ENCODE measurements at regions of chr5 and their contacts with region 1.

Region 1: GRCh38 chr5:64690417-64691151 is at the start of gene SHISAL2B:
- DNase-seq: peak in 1 of 2 experiments; percentile 87
- H3K4me3 ChIP-seq: peak within 1 kb of the TSS; percentile 46 to 65 (median 54)
- H3K27ac ChIP-seq: peak within 1 kb of the TSS; percentile 20; the same call in 1 of the 2 replicates
- H3K4me1 ChIP-seq: peaks cover 1 to 10% (median 6%) of the 10 kb centered on the region in 4 experiments
- H3K27me3 ChIP-seq: peaks cover 0 to 11% (median 8%) of the 10 kb centered on the region in 4 experiments; a peak in 6 of 7 replicates
- CTCF ChIP-seq: no peak
- EP300 ChIP-seq: no peak
- POLR2A ChIP-seq: peak; percentile 75 to 85
- RAD21 ChIP-seq: no peak
- total RNA-seq, gene SHISAL2B: 8.6 and 10.6 TPM in 2 replicates

Region 2: DNA sequence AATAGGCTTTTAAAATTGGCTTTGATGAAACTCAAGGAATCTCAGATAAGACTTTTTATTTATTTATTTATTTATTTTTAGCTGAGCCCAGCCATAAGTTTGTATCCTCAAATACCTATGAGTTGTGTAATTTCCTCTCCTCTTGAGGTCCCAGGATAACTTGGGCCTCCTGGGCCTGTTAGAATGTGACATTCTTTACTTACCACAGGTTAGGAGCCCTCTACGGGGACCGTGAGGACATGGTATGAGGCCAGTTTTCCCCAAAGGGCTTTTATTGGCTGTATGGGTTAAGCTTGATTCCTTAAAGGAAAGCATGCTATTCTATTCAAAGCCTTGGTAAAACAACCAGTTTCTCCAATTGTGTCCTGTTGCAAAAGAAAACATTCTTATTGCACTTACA is 16.6 kb after region 1 on chr5:
- CTCF ChIA-PET with region 1: interaction called, 4 read pairs
- POLR2A ChIA-PET with region 1: interaction called, 35 read pairs
- DNase-seq: no peak
- H3K4me3 ChIP-seq: no peak overlapping the region
- H3K27ac ChIP-seq: no peak overlapping the region
- H3K4me1 ChIP-seq: peaks cover 0 to 5% (median under 1%) of the 10 kb centered on the region in 4 experiments; a peak in 4 of 7 replicates
- H3K27me3 ChIP-seq: no peaks in the 10 kb centered on the region
- CTCF ChIP-seq: no peak
- EP300 ChIP-seq: no peak
- POLR2A ChIP-seq: no peak
- RAD21 ChIP-seq: no peak

Region 3: DNA sequence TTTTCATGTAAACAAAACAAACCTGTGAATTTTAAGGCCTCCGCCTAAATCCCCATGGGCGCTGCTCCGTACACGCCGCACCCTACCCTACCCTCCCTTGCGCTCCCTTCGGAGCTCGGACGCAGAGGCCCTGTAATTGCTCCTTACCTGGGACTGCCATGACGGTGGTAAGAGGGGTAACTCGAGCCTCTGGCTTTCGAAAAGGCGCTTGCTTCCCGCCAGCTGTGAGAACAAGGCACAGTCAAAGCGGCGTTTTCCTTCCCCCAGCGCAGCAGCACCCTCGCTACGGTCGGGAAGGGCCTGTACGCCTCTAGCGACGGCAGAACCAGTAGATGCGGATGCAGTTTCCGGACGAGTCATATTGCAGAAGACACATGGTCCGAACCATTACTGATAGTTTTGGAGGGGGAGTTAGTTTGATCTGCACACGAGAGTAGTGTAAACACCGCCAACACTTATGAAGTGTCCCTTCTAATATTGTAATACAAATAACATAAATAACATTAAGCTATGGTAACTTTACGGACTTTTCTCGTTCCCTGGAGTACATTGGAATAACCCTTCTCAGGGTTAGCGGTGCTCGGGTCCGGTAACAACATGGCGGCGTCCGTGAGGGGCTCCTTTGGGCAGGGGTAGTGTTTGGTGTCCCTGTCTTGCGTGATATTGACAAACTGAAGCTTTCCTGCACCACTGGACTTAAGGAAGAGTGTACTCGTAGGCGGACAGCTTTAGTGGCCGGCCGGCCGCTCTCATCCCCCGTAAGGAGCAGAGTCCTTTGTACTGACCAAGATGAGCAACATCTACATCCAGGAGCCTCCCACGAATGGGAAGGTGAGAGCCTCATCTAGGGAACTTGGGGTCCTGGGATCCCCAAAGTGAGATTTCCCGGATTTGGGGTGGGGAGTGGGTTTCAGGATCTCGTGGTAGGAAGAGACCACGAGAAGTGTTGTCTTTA is 78.1 kb after region 1 on chr5 and contains the starts of genes CWC27 and SREK1IP1:
- CTCF ChIA-PET with region 1: interaction called, 6 read pairs
- POLR2A ChIA-PET with region 1: interaction called, 30 read pairs
- DNase-seq: peak; percentile 69 to 85
- H3K4me3 ChIP-seq: peak within 1 kb of the TSS; percentile 79 to 100 (median 98)
- H3K27ac ChIP-seq: peak within 1 kb of the TSS; percentile 97
- H3K4me1 ChIP-seq: peaks cover 0 to 9% (median 3%) of the 10 kb centered on the region in 4 experiments; a peak in 4 of 7 replicates
- H3K27me3 ChIP-seq: no peaks in the 10 kb centered on the region
- CTCF ChIP-seq: peak in 1 of 3 experiments; percentile 6; a peak in 1 of 4 replicates
- EP300 ChIP-seq: peak in 1 of 2 experiments; percentile 95; a peak in 2 of 3 replicates
- POLR2A ChIP-seq: peak; percentile 85 to 95
- RAD21 ChIP-seq: peak; percentile 15 to 28; a peak in 2 of 4 replicates
- total RNA-seq, gene CWC27: 41.1 and 43.4 TPM in 2 replicates
- total RNA-seq, gene SREK1IP1: 37.2 and 39.0 TPM in 2 replicates